ENCODE measurements at regions of chr19 and their contacts with region 1.

Region 1: DNA sequence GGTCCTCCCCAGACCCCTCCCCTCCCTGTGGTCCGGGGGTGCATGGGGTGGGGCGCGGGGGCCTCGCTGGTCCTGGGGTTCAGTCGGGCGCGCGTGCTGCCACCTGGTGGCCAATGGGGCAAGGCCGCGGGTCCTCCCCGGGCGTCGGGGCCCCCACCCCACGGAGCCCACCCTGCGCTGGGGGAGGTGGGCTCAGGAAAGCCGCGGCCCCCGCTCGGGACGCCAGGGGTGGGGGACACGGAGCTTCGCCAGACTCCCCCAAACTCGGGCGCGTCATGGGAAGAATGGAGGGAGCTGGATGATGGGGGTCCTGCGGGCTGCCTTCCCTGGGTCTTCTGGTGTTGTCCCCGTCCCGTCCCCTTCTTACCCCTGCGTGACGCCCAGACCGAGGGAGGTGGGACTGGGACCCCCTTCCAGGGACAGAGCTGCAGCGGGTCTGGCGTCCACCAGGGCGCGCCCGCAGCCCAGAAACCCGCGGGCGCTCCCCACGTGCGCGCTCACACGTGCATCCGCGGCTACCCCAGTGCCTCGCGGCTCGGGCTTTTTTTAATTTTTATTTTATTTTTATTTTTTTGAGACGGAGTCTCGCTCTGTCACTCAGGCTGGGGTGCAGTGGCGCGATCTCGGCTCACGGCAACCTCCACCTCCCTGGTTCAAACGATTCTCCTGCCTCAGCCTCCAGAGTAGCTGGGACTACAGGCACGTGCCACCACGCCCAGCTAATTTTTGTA is 19.8 kb upstream of the TCF3 start:
- DNase-seq: peak in 1 of 2 experiments; percentile 54
- H3K4me3 ChIP-seq: peak overlapping the region; percentile 48
- H3K4me3 Mint-ChIP-seq: peak overlapping the region; percentile 37
- H3K27ac Mint-ChIP-seq: no peak overlapping the region
- H3K4me1 ChIP-seq: no peaks in the 10 kb centered on the region
- H3K4me1 Mint-ChIP-seq: no peaks in the 10 kb centered on the region
- H3K27me3 ChIP-seq: no peaks in the 10 kb centered on the region
- H3K27me3 Mint-ChIP-seq: peaks cover 13% of the 10 kb centered on the region
- CTCF ChIP-seq: peak; percentile 73 to 98

Region 2: GRCh38 chr19:1551068-1552040 is 120.8 kb before region 1 on chr19:
- CTCF ChIA-PET with region 1: interaction called, 5 read pairs
- POLR2A ChIA-PET with region 1: no interaction called
- intact Hi-C with region 1: loop called (anchors 5 kb)
- DNase-seq: no peak
- H3K4me3 ChIP-seq: no peak overlapping the region
- H3K4me3 Mint-ChIP-seq: no peak overlapping the region
- H3K27ac Mint-ChIP-seq: no peak overlapping the region
- H3K4me1 ChIP-seq: no peaks in the 10 kb centered on the region
- H3K4me1 Mint-ChIP-seq: no peaks in the 10 kb centered on the region
- H3K27me3 ChIP-seq: no peaks in the 10 kb centered on the region
- H3K27me3 Mint-ChIP-seq: no peaks in the 10 kb centered on the region
- CTCF ChIP-seq: no peak

Region 3: DNA sequence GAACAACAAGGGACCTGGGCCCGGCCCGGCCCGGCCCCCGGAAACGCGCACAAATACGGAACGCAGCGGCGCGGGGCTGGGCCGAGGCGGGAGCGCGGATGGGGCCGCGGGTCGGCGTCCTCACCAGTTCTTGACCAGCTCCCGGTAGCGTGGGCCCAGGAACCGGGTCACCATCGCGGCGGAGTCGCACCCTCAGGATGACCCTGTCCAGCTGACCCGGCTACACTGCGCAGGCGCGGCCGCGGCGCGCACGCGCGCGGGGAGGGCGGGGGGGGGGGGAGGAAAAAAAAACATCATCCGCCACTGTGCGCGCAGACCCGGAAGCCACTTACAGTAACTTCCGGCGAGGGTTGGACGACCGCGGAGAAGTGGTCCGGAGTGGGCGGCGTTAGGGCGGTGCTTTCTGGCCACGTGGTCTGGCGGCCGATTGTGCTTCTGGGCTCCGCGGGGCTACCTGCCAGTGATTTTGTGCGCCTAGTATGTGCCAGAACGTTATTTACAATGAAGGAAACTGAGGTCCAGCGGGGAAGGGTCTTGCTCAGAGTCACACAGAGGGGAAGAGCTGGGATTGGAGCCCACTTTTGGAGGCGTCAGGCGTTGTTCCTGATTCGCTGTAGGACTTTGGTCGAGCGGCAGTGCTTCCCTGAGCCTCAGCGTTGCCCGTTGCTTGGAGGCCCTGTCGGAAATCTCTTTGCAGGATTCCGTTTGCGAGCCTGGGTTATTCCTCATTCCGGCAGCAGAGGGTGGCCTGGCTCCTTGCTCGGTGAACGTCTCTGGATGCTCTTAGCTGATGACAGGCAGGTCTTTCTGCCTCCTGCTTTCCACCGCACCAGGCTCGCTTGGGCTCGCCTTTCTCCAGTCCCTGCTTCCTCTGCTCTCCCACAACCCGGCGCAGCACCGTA is 66.7 kb before region 1 on chr19 and contains the start of gene UQCR11:
- CTCF ChIA-PET with region 1: interaction called, 13 read pairs
- POLR2A ChIA-PET with region 1: no interaction called
- intact Hi-C with region 1: loop called (anchors 1 kb)
- DNase-seq: peak; percentile 93 to 95
- H3K4me3 ChIP-seq: peak within 1 kb of the TSS; percentile 80
- H3K4me3 Mint-ChIP-seq: peak within 1 kb of the TSS; percentile 96
- H3K27ac Mint-ChIP-seq: peak within 1 kb of the TSS; percentile 97
- H3K4me1 ChIP-seq: peaks cover 17% of the 10 kb centered on the region; the same call in 1 of the 2 replicates
- H3K4me1 Mint-ChIP-seq: no peaks in the 10 kb centered on the region
- H3K27me3 ChIP-seq: no peaks in the 10 kb centered on the region
- H3K27me3 Mint-ChIP-seq: no peaks in the 10 kb centered on the region
- CTCF ChIP-seq: peak; percentile 47 to 60
- total RNA-seq, gene UQCR11: 222 and 238 TPM in 2 replicates

Region 4: GRCh38 chr19:1646659-1647453 is 25.3 kb before region 1 on chr19:
- CTCF ChIA-PET with region 1: no interaction called
- POLR2A ChIA-PET with region 1: no interaction called
- intact Hi-C with region 1: no loop called
- DNase-seq: no peak
- H3K4me3 ChIP-seq: no peak overlapping the region
- H3K4me3 Mint-ChIP-seq: no peak overlapping the region
- H3K27ac Mint-ChIP-seq: no peak overlapping the region
- H3K4me1 ChIP-seq: no peaks in the 10 kb centered on the region
- H3K4me1 Mint-ChIP-seq: no peaks in the 10 kb centered on the region
- H3K27me3 ChIP-seq: no peaks in the 10 kb centered on the region
- H3K27me3 Mint-ChIP-seq: no peaks in the 10 kb centered on the region
- CTCF ChIP-seq: no peak

Region 5: GRCh38 chr19:1734321-1734966 is 62.2 kb after region 1 on chr19:
- CTCF ChIA-PET with region 1: no interaction called
- POLR2A ChIA-PET with region 1: no interaction called
- intact Hi-C with region 1: no loop called
- DNase-seq: no peak
- H3K4me3 ChIP-seq: no peak overlapping the region
- H3K4me3 Mint-ChIP-seq: no peak overlapping the region
- H3K27ac Mint-ChIP-seq: no peak overlapping the region
- H3K4me1 ChIP-seq: no peaks in the 10 kb centered on the region
- H3K4me1 Mint-ChIP-seq: no peaks in the 10 kb centered on the region
- H3K27me3 ChIP-seq: no peaks in the 10 kb centered on the region
- H3K27me3 Mint-ChIP-seq: peaks cover 12% of the 10 kb centered on the region
- CTCF ChIP-seq: no peak

Region 6: DNA sequence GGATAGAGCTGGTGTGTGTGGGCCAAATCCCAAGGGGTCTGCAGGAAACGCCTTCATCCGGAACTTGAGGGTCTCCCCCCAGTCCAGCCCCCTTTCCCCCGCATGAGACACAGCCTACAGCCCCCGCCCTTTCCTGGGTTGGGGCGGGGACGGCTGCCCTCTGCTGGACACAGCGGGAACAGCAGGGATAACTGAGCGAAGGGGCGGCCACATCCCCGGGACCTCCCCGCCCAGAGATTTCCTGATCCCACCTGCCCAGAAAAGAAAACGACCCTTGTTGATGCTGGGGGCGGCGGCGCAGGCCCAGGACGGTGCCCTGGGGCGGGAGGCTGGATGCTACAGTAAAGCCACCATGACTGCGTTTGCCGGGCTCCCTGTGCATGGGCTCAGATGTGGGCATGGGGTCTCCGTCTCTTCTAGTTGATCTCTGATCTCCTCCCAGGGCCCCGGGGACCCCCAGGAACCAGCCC is 95.3 kb after region 1 on chr19:
- CTCF ChIA-PET with region 1: interaction called, 9 read pairs
- POLR2A ChIA-PET with region 1: no interaction called
- intact Hi-C with region 1: loop called (anchors 1 kb)
- DNase-seq: peak in 1 of 2 experiments; percentile 67
- H3K4me3 ChIP-seq: no peak overlapping the region
- H3K4me3 Mint-ChIP-seq: no peak overlapping the region
- H3K27ac Mint-ChIP-seq: no peak overlapping the region
- H3K4me1 ChIP-seq: no peaks in the 10 kb centered on the region
- H3K4me1 Mint-ChIP-seq: no peaks in the 10 kb centered on the region
- H3K27me3 ChIP-seq: no peaks in the 10 kb centered on the region; the same call in 1 of the 2 replicates
- H3K27me3 Mint-ChIP-seq: peaks cover 18% of the 10 kb centered on the region
- CTCF ChIP-seq: peak; percentile 92 to 93

Region 7: DNA sequence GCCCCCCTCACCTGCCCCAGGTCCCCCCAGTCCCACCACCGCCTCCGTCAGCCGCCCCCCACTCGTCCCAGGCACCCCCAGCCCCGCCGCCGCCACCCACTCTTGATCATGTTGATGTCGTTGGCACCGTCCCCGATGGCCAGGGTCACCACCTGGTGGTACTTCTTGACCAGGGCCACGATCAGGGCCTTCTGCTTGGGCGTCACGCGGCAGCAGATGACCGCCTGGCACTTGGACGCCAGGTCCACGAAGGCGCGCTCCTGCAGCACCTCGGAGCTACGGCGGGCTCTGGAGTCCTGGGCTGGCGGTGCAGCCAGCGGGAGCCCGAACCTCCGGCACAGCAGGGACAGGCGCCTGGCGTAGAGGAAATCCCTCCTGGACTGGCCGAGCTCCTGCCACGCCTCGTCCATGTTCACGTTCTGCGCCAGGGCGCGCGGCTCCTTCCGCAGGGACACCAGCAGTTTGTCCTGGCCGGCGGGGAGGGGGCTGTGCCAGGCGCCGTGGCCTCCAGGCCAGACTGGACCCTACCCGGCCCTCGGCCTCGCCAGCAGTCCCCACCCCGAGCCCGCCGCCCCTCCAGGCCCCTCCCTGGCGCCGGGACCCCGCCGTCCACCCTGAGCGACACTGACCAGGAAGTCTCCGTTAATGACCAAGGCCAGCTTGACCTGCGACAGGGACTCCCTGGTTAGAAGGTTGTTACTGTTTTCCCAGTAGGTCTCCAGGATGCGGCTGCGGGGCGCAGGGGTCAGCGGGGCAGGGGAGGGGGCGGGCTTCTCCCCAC is 117.2 kb after region 1 on chr19:
- CTCF ChIA-PET with region 1: interaction called, 4 read pairs
- POLR2A ChIA-PET with region 1: no interaction called
- intact Hi-C with region 1: loop called (anchors 10 kb)
- DNase-seq: no peak
- H3K4me3 ChIP-seq: no peak overlapping the region
- H3K4me3 Mint-ChIP-seq: no peak overlapping the region
- H3K27ac Mint-ChIP-seq: no peak overlapping the region
- H3K4me1 ChIP-seq: no peaks in the 10 kb centered on the region
- H3K4me1 Mint-ChIP-seq: no peaks in the 10 kb centered on the region
- H3K27me3 ChIP-seq: no peaks in the 10 kb centered on the region
- H3K27me3 Mint-ChIP-seq: no peaks in the 10 kb centered on the region
- CTCF ChIP-seq: no peak

Region 8: DNA sequence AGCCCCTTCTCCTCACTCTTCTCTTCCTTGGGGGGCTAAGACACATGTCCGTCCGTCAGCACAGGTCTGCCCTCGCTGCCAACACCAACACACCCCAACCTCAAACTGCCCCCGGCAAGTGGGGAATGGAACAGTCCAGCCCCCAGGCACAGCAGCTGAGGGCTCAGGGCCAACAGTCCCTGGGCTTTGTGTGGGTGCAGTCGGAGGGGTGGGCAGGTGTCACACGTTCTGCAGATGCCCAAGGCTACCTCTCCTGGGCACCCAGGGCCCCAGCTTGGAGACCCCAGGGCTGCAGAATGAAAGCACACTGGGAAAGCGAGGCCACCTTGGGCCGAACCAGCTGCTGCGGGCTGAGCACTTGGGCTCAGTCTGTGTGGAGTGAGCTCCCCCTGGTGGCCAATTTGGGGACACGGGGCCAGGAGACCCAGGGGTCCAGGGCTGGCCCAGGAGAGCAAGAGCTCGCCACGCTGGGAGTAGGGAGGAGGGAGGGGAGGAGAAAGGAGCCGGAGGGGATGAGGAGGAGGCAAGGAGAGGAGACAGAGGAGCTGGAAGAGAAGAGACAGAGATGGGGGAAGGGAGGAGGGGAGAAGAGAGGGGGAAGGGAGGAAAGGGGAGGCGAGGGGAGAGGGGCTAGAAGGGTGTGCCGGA is 153.8 kb after region 1 on chr19:
- CTCF ChIA-PET with region 1: interaction called, 16 read pairs
- POLR2A ChIA-PET with region 1: no interaction called
- intact Hi-C with region 1: no loop called
- DNase-seq: peak; percentile 71 to 85
- H3K4me3 ChIP-seq: no peak overlapping the region
- H3K4me3 Mint-ChIP-seq: no peak overlapping the region
- H3K27ac Mint-ChIP-seq: no peak overlapping the region
- H3K4me1 ChIP-seq: no peaks in the 10 kb centered on the region
- H3K4me1 Mint-ChIP-seq: no peaks in the 10 kb centered on the region
- H3K27me3 ChIP-seq: no peaks in the 10 kb centered on the region
- H3K27me3 Mint-ChIP-seq: no peaks in the 10 kb centered on the region
- CTCF ChIP-seq: peak; percentile 81 to 88